B cell (primary cell): ENCODE measurements at regions of chr1 and their contacts with region 1.

Region 1: DNA sequence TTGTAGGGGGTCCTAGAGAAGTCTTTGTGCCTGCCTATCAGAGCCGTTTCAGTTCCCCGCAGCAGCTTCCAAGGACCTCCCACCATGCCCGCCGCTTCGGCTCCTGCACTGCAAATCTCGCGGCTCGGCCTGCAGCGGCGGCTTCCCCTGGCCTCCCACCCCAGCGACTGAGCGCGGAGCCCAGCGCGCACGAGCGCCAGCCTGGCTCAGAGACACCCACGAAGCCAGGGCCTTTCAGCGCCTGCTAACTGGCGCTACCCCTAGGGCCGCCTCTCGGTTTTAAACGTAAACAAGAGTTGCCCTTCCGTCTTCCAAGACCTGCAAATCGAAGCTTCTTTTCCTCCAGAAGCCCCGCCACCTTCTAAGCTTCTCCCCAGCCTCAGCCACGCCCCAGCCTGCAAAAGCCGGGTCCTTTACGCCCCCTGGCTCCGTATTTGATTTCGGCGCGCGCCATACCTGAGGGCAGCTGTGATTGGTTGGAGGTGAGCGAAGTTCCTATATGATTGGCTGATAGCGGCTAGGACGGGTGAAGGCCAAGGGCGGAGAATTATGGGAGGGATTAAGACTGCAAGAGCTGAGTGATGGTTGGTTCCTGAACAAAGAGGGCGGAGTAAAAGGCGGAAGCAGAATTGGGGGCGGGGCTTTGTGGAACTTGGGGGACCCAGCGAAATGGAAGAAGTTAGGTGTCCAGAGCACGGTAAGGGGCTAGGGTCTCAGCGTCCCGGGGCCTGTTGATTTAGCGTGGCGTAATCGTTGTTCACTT is at the start of gene TTF2:
- DNase-seq: peak; percentile 98
- ATAC-seq: peak; percentile 96
- H3K4me3 ChIP-seq: peak within 1 kb of the TSS; percentile 71 to 95 (median 79)
- H3K4me3 Mint-ChIP-seq: no peak within 1 kb of the TSS
- H3K27ac ChIP-seq: peak within 1 kb of the TSS; percentile 69 to 76
- H3K27ac Mint-ChIP-seq: no peak within 1 kb of the TSS
- H3K4me1 ChIP-seq: peaks cover 14 to 17% of the 10 kb centered on the region in 2 donors
- H3K4me1 Mint-ChIP-seq: peaks cover 25% of the 10 kb centered on the region
- H3K27me3 ChIP-seq: no peaks in the 10 kb centered on the region
- H3K27me3 Mint-ChIP-seq: no peaks in the 10 kb centered on the region
- CTCF ChIP-seq: peak; percentile 5
- total RNA-seq, gene TTF2: 28.9 and 29.1 TPM in 2 replicates

Region 2: DNA sequence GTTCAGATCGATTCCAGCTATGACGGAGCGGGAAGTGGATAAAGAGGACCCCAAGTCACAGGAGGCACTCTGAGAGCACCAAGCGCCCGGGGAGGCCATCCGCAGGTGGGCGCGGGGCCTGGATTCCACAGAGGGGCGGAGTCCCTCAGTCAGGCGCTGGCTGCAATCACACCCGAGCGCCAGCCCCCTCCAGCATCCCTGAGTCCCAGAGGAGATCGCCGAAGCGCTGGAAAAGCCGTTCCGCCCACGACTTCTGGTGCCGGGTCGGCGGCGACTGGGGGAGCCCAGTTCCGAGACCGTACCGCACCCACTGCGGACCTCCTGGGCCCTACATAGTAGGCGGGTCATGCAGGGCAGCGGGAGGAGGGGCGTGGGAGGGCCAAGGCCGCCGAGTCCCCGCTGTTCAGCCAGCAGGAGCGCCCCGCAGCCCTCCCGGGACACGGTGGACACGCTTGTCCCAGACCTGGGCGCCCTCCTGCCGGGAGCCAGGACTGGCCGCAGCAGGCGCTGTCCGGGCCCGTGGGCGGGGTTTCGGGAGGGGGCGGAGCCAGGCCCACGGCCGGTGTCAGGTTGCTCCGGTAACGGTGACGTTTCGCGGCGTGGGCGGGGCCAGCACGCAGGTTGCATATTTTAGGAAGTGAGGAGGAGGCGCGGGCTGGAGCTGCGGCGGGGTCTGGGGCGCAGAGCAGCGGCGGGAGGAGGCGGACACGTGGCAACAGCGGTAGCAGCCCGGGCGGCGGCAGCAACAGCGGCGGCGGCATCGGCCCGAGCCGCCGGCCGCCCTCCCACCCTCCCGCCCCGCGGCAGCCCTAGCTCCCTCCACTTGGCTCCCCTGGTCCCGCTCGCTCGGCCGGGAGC is 687.0 kb before region 1 on chr1 and contains the start of gene ATP1A1:
- CTCF ChIA-PET with region 1: no interaction called
- POLR2A ChIA-PET with region 1: no interaction called
- intact Hi-C with region 1: loop called (anchors 1 kb)
- DNase-seq: peak; percentile 99
- ATAC-seq: peak; percentile 79
- H3K4me3 ChIP-seq: peak within 1 kb of the TSS; percentile 46 to 90 (median 84)
- H3K4me3 Mint-ChIP-seq: peak within 1 kb of the TSS; percentile 96
- H3K27ac ChIP-seq: peak within 1 kb of the TSS; percentile 81 to 91
- H3K27ac Mint-ChIP-seq: peak within 1 kb of the TSS; percentile 96
- H3K4me1 ChIP-seq: peaks cover 39 to 44% of the 10 kb centered on the region in 2 donors
- H3K4me1 Mint-ChIP-seq: peaks cover 37% of the 10 kb centered on the region
- H3K27me3 ChIP-seq: peaks cover 0 to 7% (median 3%) of the 10 kb centered on the region in 4 experiments
- H3K27me3 Mint-ChIP-seq: peaks cover 20% of the 10 kb centered on the region
- CTCF ChIP-seq: no peak
- total RNA-seq, gene ATP1A1: 101 and 107 TPM in 2 replicates

Region 3: GRCh38 chr1:116737020-116737854 is 322.6 kb before region 1 on chr1:
- CTCF ChIA-PET with region 1: interaction called, 64 read pairs
- POLR2A ChIA-PET with region 1: interaction called, 3 read pairs
- intact Hi-C with region 1: loop called (anchors 1 kb)
- DNase-seq: peak; percentile 68
- ATAC-seq: peak; percentile 60
- H3K4me3 ChIP-seq: no peak overlapping the region
- H3K4me3 Mint-ChIP-seq: peak overlapping the region; percentile 63
- H3K27ac ChIP-seq: no peak overlapping the region
- H3K27ac Mint-ChIP-seq: peak overlapping the region; percentile 66
- H3K4me1 ChIP-seq: peaks cover 20 to 24% of the 10 kb centered on the region in 2 donors
- H3K4me1 Mint-ChIP-seq: peaks cover 30% of the 10 kb centered on the region
- H3K27me3 ChIP-seq: no peaks in the 10 kb centered on the region
- H3K27me3 Mint-ChIP-seq: no peaks in the 10 kb centered on the region
- CTCF ChIP-seq: peak; percentile 74

Region 4: GRCh38 chr1:117128323-117129079 is 68.6 kb after region 1 on chr1:
- CTCF ChIA-PET with region 1: interaction called, 13 read pairs
- POLR2A ChIA-PET with region 1: no interaction called
- intact Hi-C with region 1: no loop called
- DNase-seq: peak; percentile 32
- ATAC-seq: no peak
- H3K4me3 ChIP-seq: no peak overlapping the region
- H3K4me3 Mint-ChIP-seq: no peak overlapping the region
- H3K27ac ChIP-seq: no peak overlapping the region
- H3K27ac Mint-ChIP-seq: no peak overlapping the region
- H3K4me1 ChIP-seq: no peaks in the 10 kb centered on the region
- H3K4me1 Mint-ChIP-seq: no peaks in the 10 kb centered on the region
- H3K27me3 ChIP-seq: peaks cover 0 to 13% (median 5%) of the 10 kb centered on the region in 4 experiments
- H3K27me3 Mint-ChIP-seq: peaks cover 14% of the 10 kb centered on the region
- CTCF ChIP-seq: peak; percentile 72

Region 5: DNA sequence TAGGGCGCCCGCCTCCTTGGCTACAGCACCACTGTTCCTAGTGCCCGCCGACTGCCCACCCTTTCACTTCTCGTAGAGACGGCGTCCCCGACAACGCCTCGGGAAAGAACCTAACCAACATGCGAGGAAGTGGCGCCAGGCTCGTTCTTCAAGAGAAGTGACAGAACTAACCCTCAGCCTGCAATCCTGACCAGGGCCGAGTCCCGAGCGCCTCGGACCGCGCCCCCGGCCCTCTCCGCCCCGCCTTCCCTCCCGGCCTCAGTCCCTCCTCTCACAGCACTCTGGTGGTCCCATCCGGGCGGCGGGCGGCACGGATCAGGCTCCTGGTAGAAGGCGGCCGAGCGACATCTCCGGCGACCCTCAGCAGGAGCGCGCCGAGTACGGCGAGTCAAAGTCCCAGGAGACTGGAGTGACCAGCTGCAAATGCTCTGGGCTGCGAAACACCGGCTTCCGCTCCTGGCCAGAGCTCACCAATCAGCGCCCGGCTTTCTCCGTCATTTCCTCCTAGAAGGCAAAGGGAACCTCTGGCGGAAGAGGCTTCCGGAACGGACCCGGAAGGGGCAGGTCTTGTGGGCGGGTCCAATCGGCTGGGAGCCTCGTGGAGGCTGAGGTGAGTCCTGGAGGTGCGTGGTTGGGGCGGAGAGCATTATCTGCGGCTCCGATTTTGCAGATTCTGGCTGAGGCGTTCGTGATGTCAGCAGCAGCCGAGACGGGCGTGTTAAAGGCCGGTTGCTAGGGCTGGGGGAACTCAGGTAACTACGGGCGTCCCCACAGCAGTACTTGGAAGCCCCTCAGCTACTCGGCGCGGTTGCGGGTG is 869.5 kb after region 1 on chr1 and contains the starts of genes GDAP2 and WDR3:
- CTCF ChIA-PET with region 1: no interaction called
- POLR2A ChIA-PET with region 1: no interaction called
- intact Hi-C with region 1: loop called (anchors 1 kb)
- DNase-seq: peak; percentile 96
- ATAC-seq: peak; percentile 89
- H3K4me3 ChIP-seq: peak within 1 kb of the TSS; percentile 82 to 91 (median 86)
- H3K4me3 Mint-ChIP-seq: peak within 1 kb of the TSS; percentile 99
- H3K27ac ChIP-seq: peak within 1 kb of the TSS; percentile 77 to 91
- H3K27ac Mint-ChIP-seq: peak within 1 kb of the TSS; percentile 92
- H3K4me1 ChIP-seq: peaks cover 24 to 31% of the 10 kb centered on the region in 2 donors
- H3K4me1 Mint-ChIP-seq: peaks cover 59% of the 10 kb centered on the region
- H3K27me3 ChIP-seq: no peaks in the 10 kb centered on the region
- H3K27me3 Mint-ChIP-seq: no peaks in the 10 kb centered on the region
- CTCF ChIP-seq: no peak
- total RNA-seq, gene GDAP2: 36.7 and 41.5 TPM in 2 replicates
- total RNA-seq, gene WDR3: 14.9 and 18.5 TPM in 2 replicates